ENCODE measurements at regions of chr6 and their contacts with region 1.

Region 1: DNA sequence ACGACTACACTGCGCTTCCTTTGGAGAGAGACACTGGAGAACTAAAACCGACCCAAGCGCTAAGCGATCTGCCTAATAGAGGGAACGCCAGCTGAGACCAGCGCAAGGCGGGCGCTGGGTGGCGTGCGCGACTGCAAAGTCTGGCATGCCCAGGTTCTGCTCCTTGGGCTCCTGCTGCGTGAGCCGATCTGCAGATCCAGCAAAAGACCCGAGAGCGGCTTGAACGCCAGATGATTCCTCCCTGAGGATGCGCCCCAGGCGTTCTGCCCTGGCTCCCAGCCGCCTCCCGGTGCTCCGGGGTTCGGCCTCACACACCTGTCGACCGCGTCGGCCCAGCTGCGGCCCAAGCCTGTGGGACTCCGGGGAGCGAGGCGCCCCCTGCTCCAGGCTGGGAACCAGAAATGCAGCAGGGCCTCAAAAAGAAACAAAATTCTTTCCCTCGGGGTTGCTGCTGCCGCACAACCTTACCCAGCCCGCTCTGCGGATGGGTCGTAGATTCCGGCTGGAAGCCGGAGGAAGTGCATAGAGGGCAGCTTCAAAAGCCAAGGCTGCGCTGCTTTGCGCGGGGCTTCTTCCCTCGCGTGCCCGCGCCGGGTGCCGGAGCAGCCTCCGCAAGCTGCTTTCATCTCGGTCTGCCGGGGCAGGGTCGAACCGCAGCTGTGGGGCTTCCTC is 17.9 kb upstream of the PRDM13 start:
- DNase-seq: peak; percentile 71
- CTCF ChIP-seq: peak; percentile 86

Region 2: DNA sequence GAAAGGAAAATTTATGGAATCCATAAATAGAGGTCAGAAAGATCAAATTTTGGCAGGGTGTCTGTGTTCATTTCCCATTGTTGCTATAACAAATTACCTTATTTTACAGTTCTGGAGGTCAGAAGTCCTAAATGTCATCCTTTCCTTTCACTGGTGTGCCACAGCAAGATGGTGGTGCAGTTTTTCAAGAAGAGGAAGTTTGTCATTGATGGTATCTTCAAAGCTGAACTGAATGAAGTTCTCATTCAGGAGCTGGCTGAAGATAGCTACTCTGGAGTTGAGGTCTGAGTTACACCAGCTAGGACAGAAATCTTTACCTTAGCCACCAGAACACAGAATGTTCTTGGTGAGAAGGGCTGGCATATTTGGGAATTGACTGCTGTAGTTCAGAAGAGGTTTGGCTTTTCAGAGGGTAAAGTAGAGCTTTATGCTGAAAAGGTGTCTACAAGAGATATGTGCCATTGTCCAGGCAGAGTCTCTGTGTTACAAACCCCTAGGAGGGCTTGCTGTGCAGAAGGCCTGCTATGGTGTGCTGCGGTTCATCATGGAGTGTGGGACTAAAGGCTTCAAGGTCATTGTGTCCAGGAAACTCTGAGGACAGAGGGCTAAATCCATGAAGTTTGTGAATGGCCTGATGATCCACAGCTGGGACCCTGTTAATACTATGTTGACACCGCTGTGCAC is 13.1 kb before region 1 on chr6:
- CTCF ChIA-PET with region 1: interaction called, 73 read pairs
- POLR2A ChIA-PET with region 1: no interaction called
- DNase-seq: no peak
- CTCF ChIP-seq: no peak

Region 3: GRCh38 chr6:99603421-99604165 is 14.8 kb after region 1 on chr6:
- CTCF ChIA-PET with region 1: interaction called, 12 read pairs
- POLR2A ChIA-PET with region 1: no interaction called
- DNase-seq: no peak
- CTCF ChIP-seq: no peak

Region 4: GRCh38 chr6:99613409-99613704 is 24.6 kb after region 1 on chr6:
- CTCF ChIA-PET with region 1: interaction called, 15 read pairs
- POLR2A ChIA-PET with region 1: no interaction called
- DNase-seq: peak; percentile 75
- CTCF ChIP-seq: peak; percentile 69

Region 5: GRCh38 chr6:99618649-99619408 is 30.1 kb after region 1 on chr6:
- CTCF ChIA-PET with region 1: interaction called, 10 read pairs
- POLR2A ChIA-PET with region 1: no interaction called
- DNase-seq: no peak
- CTCF ChIP-seq: no peak

Region 6: GRCh38 chr6:99746261-99746895 is 157.6 kb after region 1 on chr6:
- CTCF ChIA-PET with region 1: interaction called, 20 read pairs
- POLR2A ChIA-PET with region 1: no interaction called
- DNase-seq: peak; percentile 48
- CTCF ChIP-seq: peak; percentile 82

Region 7: DNA sequence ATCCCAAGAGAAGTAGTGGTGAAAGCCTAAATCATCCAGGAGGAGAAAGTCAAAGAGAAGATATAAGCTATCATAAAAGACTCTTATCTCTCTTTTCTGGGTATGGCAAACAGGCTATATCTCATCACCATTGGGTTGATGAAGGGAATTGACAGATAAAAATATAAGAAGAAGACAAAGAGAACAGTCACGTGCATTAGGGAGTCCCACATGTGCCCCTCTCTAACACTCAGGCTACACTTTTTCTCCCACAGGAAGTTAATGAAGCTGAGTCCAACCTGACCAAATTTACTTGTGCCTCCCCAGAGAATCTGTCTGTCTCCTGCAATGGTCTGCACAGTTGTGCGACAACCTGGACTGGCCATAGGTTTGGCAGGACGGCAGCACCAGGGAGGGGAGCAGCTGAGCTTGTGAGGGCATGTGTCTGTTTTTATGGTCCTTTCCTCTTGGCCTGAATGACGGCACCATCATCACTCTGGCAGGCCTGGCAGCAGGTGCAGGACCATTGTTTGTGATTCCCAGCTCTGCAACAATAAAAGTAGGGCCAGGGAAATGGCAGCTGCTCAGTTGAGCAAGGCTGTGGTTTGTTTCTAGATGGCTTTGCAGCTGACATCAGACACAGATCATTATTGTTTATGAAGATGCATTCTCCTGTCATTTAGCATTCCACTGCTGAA is 549.7 kb after region 1 on chr6:
- CTCF ChIA-PET with region 1: no interaction called
- POLR2A ChIA-PET with region 1: no interaction called
- DNase-seq: no peak
- CTCF ChIP-seq: no peak

Measured in GM10248 (cell line).